Psoas muscle (tissue), 8 donors: ENCODE measurements at regions of chr21 and their contacts with region 1.

Region 1: GRCh38 chr21:41460578-41461527 is 34.8 kb downstream of the MX1 start:
- DNase-seq: peak; percentile 72 to 84
- ATAC-seq: peak; percentile 46 to 82 (median 69)
- H3K4me3 ChIP-seq: no peak overlapping the region
- H3K27ac ChIP-seq: no peak overlapping the region
- H3K4me1 ChIP-seq: no peaks in the 10 kb centered on the region
- H3K27me3 ChIP-seq: peaks cover 0 to 5% (median 0%) of the 10 kb centered on the region in 3 donors
- CTCF ChIP-seq: peak; percentile 64

Region 2: GRCh38 chr21:41121785-41122421 is 338.9 kb before region 1 on chr21:
- intact Hi-C with region 1: loop called in 1 of 2 experiments (anchors 5 kb)
- DNase-seq: peak; percentile 81 to 82
- ATAC-seq: peak; percentile 56 to 80 (median 62)
- H3K4me3 ChIP-seq: no peak overlapping the region
- H3K27ac ChIP-seq: no peak overlapping the region
- H3K4me1 ChIP-seq: no peaks in the 10 kb centered on the region
- H3K27me3 ChIP-seq: peaks cover 0 to 4% (median 0%) of the 10 kb centered on the region in 3 donors
- CTCF ChIP-seq: peak; percentile 71

Region 3: DNA sequence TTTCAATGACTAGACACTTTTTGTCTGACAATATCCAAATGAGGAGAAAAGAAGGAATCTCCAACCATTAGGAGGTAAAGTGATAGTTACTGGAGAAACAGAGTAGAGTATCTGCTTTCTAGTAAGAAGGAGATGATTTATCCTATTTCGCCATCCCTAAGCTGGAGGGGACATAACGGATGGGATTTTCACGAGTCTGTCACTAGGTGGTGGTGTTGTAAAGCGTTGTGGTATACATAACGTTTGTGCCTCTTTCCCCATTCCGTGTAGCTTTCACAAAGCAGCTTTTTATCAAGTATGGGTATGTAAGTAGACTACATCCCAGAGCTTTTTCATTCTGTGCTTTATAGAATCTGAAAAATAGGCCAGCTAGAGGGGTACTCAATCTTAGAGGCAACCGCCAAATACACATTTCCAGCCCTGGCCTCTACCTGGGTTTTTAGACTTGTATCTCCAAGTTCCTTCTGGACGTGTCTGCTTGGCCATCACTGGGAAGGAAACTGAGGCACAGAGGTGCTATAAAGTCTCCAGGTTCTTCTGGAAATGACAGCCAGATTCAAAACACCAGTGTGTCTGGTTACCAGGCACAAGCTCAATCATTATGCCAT is 177.5 kb before region 1 on chr21:
- intact Hi-C with region 1: loop called (anchors 2 to 10 kb)
- DNase-seq: no peak
- ATAC-seq: peak in 3 of 4 donors; percentile 72 to 83 (median 74)
- H3K4me3 ChIP-seq: no peak overlapping the region
- H3K27ac ChIP-seq: no peak overlapping the region
- H3K4me1 ChIP-seq: no peaks in the 10 kb centered on the region
- H3K27me3 ChIP-seq: peaks cover 0 to 18% (median 2%) of the 10 kb centered on the region in 3 donors
- CTCF ChIP-seq: peak; percentile 64

Region 4: GRCh38 chr21:41752231-41752681 is 291.4 kb after region 1 on chr21:
- intact Hi-C with region 1: no loop called
- DNase-seq: no peak
- ATAC-seq: no peak
- H3K4me3 ChIP-seq: no peak overlapping the region
- H3K27ac ChIP-seq: no peak overlapping the region
- H3K4me1 ChIP-seq: no peaks in the 10 kb centered on the region
- H3K27me3 ChIP-seq: peaks cover 0 to 17% (median 4%) of the 10 kb centered on the region in 3 donors
- CTCF ChIP-seq: no peak